Endothelial cell of umbilical vein (primary cell): ENCODE measurements at regions of chr6 and their contacts with region 1.

Region 1: GRCh38 chr6:63598049-63599036 is 26.1 kb downstream of the LOC128125822 start:
- DNase-seq: peak; percentile 73
- H3K4me3 ChIP-seq: peak overlapping the region; percentile 12 to 63 (median 42)
- H3K27ac ChIP-seq: no peak overlapping the region
- H3K4me1 ChIP-seq: peaks cover 2% of the 10 kb centered on the region
- H3K27me3 ChIP-seq: peaks cover 0 to 2% of the 10 kb centered on the region in 2 experiments
- CTCF ChIP-seq: peak; percentile 79 to 83
- POLR2A ChIP-seq: no peak

Region 2: GRCh38 chr6:63571881-63572732 is 26.2 kb before region 1 on chr6 and contains the starts of genes LOC128125822 and PTP4A1:
- CTCF ChIA-PET with region 1: interaction called, 12 read pairs
- POLR2A ChIA-PET with region 1: no interaction called
- dilution Hi-C with region 1: no loop called
- intact Hi-C with region 1: no loop called
- DNase-seq: peak; percentile 97
- H3K4me3 ChIP-seq: peak within 1 kb of the TSS; percentile 13 to 96 (median 88)
- H3K27ac ChIP-seq: peak within 1 kb of the TSS; percentile 61
- H3K4me1 ChIP-seq: peaks cover 18% of the 10 kb centered on the region
- H3K27me3 ChIP-seq: peaks cover 8 to 10% of the 10 kb centered on the region in 2 experiments
- CTCF ChIP-seq: no peak
- POLR2A ChIP-seq: peak; percentile 87
- total RNA-seq, gene PTP4A1: 58.4 and 65.1 TPM in 2 replicates

Region 3: GRCh38 chr6:63610944-63611343 is 12.6 kb after region 1 on chr6:
- CTCF ChIA-PET with region 1: interaction called, 25 read pairs
- POLR2A ChIA-PET with region 1: no interaction called
- dilution Hi-C with region 1: no loop called
- intact Hi-C with region 1: no loop called
- DNase-seq: no peak
- H3K4me3 ChIP-seq: no peak overlapping the region
- H3K27ac ChIP-seq: no peak overlapping the region
- H3K4me1 ChIP-seq: no peaks in the 10 kb centered on the region
- H3K27me3 ChIP-seq: no peaks in the 10 kb centered on the region
- CTCF ChIP-seq: no peak
- POLR2A ChIP-seq: no peak

Region 4: DNA sequence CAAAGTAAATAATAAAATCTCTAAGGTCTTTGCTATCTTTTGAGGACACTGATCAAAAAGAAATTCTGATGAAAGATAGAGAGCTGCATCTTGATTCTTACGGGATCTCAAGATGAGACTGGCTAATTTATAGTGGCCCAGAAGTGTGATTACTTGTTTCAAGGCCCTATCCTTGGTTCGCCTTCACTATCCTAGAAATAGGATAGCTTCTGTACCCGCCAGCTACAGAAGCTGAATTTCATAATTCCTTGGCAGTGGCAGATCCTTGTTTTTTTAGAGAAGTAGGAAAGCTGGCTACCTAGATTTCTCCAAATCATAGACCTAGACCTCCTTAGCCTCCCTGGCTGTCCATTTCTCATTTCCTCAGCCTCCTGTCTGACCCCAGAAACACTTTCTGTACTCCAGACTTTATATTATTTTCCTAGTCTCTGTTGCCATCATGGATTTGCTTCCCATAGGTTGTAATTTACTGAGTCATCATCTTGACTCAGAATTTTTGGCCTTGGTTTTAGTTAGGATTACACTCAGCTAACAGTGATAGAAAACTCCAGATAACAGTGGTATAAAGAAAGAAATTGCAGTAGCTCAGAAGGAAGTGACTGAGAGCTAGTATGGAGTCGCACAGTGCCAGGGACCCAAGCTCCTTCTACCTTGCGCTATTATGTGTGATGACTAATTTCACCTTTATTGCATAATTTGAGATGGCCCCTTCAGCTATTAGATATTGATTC is 65.0 kb after region 1 on chr6:
- CTCF ChIA-PET with region 1: interaction called, 11 read pairs
- POLR2A ChIA-PET with region 1: no interaction called
- dilution Hi-C with region 1: no loop called
- intact Hi-C with region 1: no loop called
- DNase-seq: peak; percentile 69
- H3K4me3 ChIP-seq: no peak overlapping the region
- H3K27ac ChIP-seq: peak overlapping the region; percentile 40
- H3K4me1 ChIP-seq: peaks cover 15% of the 10 kb centered on the region
- H3K27me3 ChIP-seq: no peaks in the 10 kb centered on the region
- CTCF ChIP-seq: no peak
- POLR2A ChIP-seq: no peak

Region 5: GRCh38 chr6:64050590-64050989 is 452.2 kb after region 1 on chr6:
- CTCF ChIA-PET with region 1: no interaction called
- POLR2A ChIA-PET with region 1: no interaction called
- dilution Hi-C with region 1: no loop called
- intact Hi-C with region 1: no loop called
- DNase-seq: no peak
- H3K4me3 ChIP-seq: no peak overlapping the region
- H3K27ac ChIP-seq: no peak overlapping the region
- H3K4me1 ChIP-seq: no peaks in the 10 kb centered on the region
- H3K27me3 ChIP-seq: no peaks in the 10 kb centered on the region
- CTCF ChIP-seq: no peak
- POLR2A ChIP-seq: no peak

Region 6: DNA sequence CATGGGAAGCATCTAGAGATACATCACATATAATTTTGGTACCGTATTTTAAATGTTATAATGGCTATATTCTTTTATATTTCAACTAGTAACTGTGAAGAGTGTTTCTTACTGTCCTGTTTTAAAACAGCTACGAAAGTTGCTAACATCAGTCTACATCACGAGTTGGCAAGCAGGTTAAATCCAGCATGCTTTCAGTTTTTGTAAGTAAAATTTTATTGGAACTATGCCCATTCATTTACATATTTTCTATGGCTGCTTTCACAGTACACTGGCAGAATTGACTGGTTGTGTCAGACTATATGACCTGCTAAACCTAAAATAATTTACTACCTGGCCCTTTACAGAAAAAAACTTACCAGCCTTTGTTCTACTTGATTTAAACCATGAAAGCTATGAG is 515.4 kb after region 1 on chr6:
- CTCF ChIA-PET with region 1: no interaction called
- POLR2A ChIA-PET with region 1: no interaction called
- dilution Hi-C with region 1: no loop called
- intact Hi-C with region 1: no loop called
- DNase-seq: no peak
- H3K4me3 ChIP-seq: no peak overlapping the region
- H3K27ac ChIP-seq: no peak overlapping the region
- H3K4me1 ChIP-seq: no peaks in the 10 kb centered on the region
- H3K27me3 ChIP-seq: no peaks in the 10 kb centered on the region
- CTCF ChIP-seq: no peak
- POLR2A ChIP-seq: no peak